Pancreas (tissue), 10 donors: ENCODE measurements at regions of chr3 and their contacts with region 1.

Region 1: GRCh38 chr3:58332575-58333188 is at the start of gene PXK:
- DNase-seq: peak; percentile 73 to 95 (median 82)
- ATAC-seq: peak; percentile 93 to 99 (median 96)
- H3K4me3 ChIP-seq: peak within 1 kb of the TSS; percentile 55 to 83 (median 72)
- H3K27ac ChIP-seq: peak within 1 kb of the TSS in 1 of 4 donors; percentile 33
- H3K4me1 ChIP-seq: peaks cover 0 to 10% (median 5%) of the 10 kb centered on the region in 3 donors
- H3K27me3 ChIP-seq: no peaks in the 10 kb centered on the region
- CTCF ChIP-seq: no peak
- total RNA-seq, gene PXK: 6.1 to 11.2 (median 7.9) TPM

Region 2: GRCh38 chr3:58288011-58288728 is 44.5 kb before region 1 on chr3:
- intact Hi-C with region 1: no loop called
- DNase-seq: no peak
- ATAC-seq: no peak
- H3K4me3 ChIP-seq: no peak overlapping the region
- H3K27ac ChIP-seq: no peak overlapping the region
- H3K4me1 ChIP-seq: no peaks in the 10 kb centered on the region
- H3K27me3 ChIP-seq: no peaks in the 10 kb centered on the region
- CTCF ChIP-seq: no peak

Region 3: GRCh38 chr3:58491506-58492402 is 159.1 kb after region 1 on chr3 and contains the start of gene KCTD6:
- intact Hi-C with region 1: loop called in 1 of 3 experiments (anchors 10 kb)
- DNase-seq: peak; percentile 91 to 98 (median 96)
- ATAC-seq: peak; percentile 93 to 97 (median 94)
- H3K4me3 ChIP-seq: peak within 1 kb of the TSS; percentile 59 to 75 (median 66)
- H3K27ac ChIP-seq: peak within 1 kb of the TSS; percentile 1 to 54 (median 34)
- H3K4me1 ChIP-seq: peaks cover 5 to 16% (median 13%) of the 10 kb centered on the region in 3 donors
- H3K27me3 ChIP-seq: no peaks in the 10 kb centered on the region
- CTCF ChIP-seq: peak; percentile 45 to 63 (median 62)
- total RNA-seq, gene KCTD6: 2.2 to 6.0 (median 3.5) TPM